ENCODE measurements at regions of chr11 and their contacts with region 1.

Region 1: DNA sequence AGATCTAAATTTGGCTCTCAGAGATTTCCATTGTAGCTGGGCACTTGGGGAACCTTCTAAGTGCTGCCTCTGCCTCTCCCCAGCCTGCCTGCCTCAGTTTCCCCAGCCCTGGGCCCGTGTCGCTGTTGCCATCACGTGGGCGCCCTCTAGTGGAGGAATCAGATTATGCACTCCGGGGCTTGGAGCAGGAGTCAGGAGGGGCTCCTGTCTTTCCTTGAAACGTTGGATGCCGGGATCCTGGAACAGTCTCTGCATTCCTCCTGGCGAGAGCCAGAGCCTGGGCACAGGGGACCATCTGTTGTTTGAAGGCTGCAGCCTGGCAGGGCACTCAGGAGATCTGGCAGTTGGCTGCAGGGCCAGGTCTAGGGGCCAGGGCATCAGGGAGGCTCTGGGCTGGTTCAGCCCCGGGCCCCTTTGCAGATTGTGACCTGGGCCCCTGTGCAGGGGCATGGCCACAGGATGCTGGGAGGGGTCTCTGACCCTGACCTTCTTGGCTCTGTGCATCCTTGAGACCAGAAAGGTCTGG is 71.6 kb downstream of the LRP5 start:
- DNase-seq: peak; percentile 60 to 62
- ATAC-seq: peak in 1 of 2 experiments; percentile 5; a peak in 2 of 6 replicates
- H3K4me3 ChIP-seq: no peak overlapping the region
- H3K27ac ChIP-seq: peak overlapping the region in 1 of 2 experiments; percentile 44; a peak in 2 of 6 replicates
- H3K4me1 ChIP-seq: peaks cover 43% of the 10 kb centered on the region
- CTCF ChIP-seq: peak; percentile 95
- EP300 ChIP-seq: no peak
- POLR2A ChIP-seq: no peak
- RAD21 ChIP-seq: peak; percentile 94 to 95

Region 2: GRCh38 chr11:68142028-68142412 is 242.0 kb before region 1 on chr11:
- CTCF ChIA-PET with region 1: no interaction called
- POLR2A ChIA-PET with region 1: no interaction called
- DNase-seq: no peak
- ATAC-seq: no peak
- H3K4me3 ChIP-seq: no peak overlapping the region
- H3K27ac ChIP-seq: peak overlapping the region; percentile 9 to 38; a peak in 1 of 6 replicates
- H3K4me1 ChIP-seq: peaks cover 40% of the 10 kb centered on the region
- CTCF ChIP-seq: no peak
- EP300 ChIP-seq: no peak
- POLR2A ChIP-seq: no peak
- RAD21 ChIP-seq: no peak

Region 3: DNA sequence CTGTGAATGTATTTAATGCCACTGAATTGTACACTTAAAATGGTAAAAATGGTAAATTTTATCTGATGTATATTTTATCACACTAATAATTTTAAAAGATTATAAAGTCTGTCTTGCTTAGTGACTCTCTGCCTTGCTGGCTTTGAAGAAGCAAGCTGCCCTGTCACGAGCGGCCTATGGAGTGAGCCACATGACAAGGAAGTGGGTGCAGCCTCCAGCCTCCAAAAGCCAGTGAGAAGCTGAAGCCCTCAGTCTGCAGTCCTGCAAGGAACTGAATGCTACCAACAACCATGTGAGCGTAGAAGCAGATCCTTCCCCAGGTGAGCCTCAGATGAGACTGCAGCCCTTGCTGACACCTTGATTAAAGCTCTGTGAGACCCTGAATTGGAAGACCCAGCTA is 132.3 kb before region 1 on chr11:
- CTCF ChIA-PET with region 1: interaction called, 81 read pairs
- POLR2A ChIA-PET with region 1: no interaction called
- DNase-seq: no peak
- ATAC-seq: no peak
- H3K4me3 ChIP-seq: no peak overlapping the region
- H3K27ac ChIP-seq: no peak overlapping the region
- H3K4me1 ChIP-seq: peaks cover 8% of the 10 kb centered on the region
- CTCF ChIP-seq: no peak
- EP300 ChIP-seq: no peak
- POLR2A ChIP-seq: no peak
- RAD21 ChIP-seq: no peak

Region 4: DNA sequence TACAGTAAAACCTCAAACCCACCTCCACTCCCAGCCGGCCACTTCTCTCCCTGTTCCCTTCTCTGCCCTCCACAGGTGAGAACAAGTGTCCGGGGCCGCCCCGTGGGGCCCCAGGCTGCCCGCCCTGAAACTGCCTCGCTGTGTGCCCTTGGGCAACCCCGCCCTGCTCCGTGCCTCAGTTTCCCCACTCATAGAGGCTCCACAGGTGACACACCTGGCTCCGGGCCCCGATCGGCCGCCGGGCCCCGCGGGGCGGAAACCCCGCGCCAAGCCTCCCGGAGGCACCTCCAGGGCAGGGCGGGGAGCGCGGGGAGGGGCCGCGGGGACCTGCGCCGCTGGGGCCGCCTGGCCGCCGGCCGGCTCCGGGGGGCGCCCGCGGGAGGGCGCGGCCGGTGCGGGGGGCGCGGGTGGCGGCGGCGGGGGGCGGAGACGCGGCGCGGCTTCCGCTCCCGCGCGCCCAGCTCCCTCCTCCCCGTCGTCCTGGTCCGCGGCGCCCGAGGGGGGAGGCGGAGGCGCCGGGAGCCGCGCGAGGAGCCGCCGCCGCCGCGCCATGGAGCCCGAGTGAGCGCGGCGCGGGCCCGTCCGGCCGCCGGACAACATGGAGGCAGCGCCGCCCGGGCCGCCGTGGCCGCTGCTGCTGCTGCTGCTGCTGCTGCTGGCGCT is 71.8 kb before region 1 on chr11 and contains the start of gene LRP5:
- CTCF ChIA-PET with region 1: interaction called, 11 read pairs
- POLR2A ChIA-PET with region 1: no interaction called
- DNase-seq: no peak
- ATAC-seq: peak in 1 of 2 experiments; percentile 22; a peak in 3 of 6 replicates
- H3K4me3 ChIP-seq: peak within 1 kb of the TSS; percentile 91
- H3K27ac ChIP-seq: peak within 1 kb of the TSS; percentile 90 to 99
- H3K4me1 ChIP-seq: peaks cover 32% of the 10 kb centered on the region
- CTCF ChIP-seq: peak; percentile 8; the same call in 1 of the 3 replicates
- EP300 ChIP-seq: no peak
- POLR2A ChIP-seq: peak; percentile 25; the same call in 1 of the 2 replicates
- RAD21 ChIP-seq: no peak
- polyA plus RNA-seq, gene LRP5: 10.9 and 15.9 TPM in 2 replicates

Region 5: DNA sequence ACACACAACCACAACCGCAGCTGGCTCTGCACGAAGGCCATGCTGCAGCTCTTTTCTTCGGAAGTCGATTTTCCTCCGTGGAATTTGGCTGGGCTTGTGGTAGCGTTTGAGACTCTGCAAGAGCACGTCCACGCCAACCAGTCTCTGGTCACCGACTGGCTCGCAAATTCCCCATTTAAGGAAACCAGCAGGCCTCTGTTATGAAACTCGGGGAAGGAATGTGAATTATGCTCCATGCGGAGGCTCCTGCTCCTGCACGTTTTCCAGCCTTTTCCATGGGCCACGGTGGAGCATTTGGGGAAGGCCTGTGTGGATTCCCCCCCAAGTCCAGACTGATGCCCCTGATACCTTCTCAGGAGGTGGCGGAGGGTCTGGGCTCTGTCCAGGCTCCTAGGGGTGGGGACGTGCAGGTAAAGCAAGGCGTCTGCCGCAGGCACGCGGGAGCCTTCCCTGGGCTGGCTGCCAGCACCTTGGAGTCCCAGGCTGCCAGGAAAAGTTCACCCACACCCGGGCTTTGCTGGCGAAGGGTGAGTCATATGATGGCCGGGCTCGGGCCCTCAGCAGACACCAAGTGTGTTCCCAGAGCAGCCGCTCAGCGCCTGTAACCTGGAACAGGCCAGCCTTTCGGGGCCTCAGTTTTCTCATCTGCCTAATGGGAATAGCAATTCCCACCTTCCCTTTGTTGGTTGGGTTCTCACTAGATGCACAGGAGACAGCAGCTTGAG is 29.7 kb before region 1 on chr11:
- CTCF ChIA-PET with region 1: interaction called, 33 read pairs
- POLR2A ChIA-PET with region 1: interaction called, 6 read pairs
- DNase-seq: peak; percentile 91 to 98
- ATAC-seq: peak; percentile 79 to 92
- H3K4me3 ChIP-seq: no peak overlapping the region
- H3K27ac ChIP-seq: peak overlapping the region; percentile 91 to 92
- H3K4me1 ChIP-seq: peaks cover 34% of the 10 kb centered on the region
- CTCF ChIP-seq: peak; percentile 7; the same call in 1 of the 3 replicates
- EP300 ChIP-seq: peak in 1 of 2 experiments; percentile 63; a peak in 1 of 5 replicates
- POLR2A ChIP-seq: no peak
- RAD21 ChIP-seq: peak; percentile 9 to 29; a peak in 2 of 5 replicates

Region 6: GRCh38 chr11:68396526-68396925 is 12.5 kb after region 1 on chr11:
- CTCF ChIA-PET with region 1: interaction called, 21 read pairs
- POLR2A ChIA-PET with region 1: no interaction called
- DNase-seq: no peak
- ATAC-seq: no peak; a peak in 1 of 6 replicates
- H3K4me3 ChIP-seq: no peak overlapping the region
- H3K27ac ChIP-seq: no peak overlapping the region
- H3K4me1 ChIP-seq: no peaks in the 10 kb centered on the region; the same call in 2 of the 3 replicates
- CTCF ChIP-seq: no peak
- EP300 ChIP-seq: no peak
- POLR2A ChIP-seq: no peak
- RAD21 ChIP-seq: no peak